ENCODE measurements at regions of chr11 and their contacts with region 1.

Region 1: DNA sequence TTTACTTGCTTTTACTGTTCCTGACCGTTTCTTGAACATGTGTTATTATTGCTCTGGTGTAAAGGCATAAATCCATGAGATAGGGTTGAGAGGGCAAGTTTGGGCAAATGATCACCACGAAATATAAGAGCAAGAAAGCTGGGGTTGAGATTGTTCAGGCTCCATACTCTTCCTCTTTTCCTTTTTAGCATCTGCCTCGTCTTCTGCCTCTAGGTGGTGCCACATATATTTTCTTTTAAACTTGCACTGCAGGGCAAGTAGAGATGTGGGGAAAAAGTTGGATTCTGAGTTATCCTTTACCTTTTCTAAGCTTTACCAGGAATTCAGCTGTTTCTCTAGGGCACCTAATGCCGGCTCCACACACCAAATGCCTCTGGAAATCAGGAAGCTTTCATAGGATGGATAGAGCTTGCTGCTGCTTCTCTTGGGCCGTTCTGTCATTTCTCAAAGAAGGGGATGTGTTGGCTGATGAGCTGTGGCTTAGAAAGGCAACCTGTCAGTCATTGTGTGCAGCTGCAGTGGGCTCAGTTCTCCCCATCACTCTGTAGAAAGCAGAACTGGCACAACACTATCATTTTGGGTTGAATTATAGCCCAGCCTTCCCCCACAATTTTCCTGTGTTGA is 98.2 kb downstream of the LDLRAD3 start:
- DNase-seq: no peak
- H3K4me3 ChIP-seq: no peak overlapping the region
- H3K27me3 ChIP-seq: no peaks in the 10 kb centered on the region
- CTCF ChIP-seq: peak; percentile 69

Region 2: DNA sequence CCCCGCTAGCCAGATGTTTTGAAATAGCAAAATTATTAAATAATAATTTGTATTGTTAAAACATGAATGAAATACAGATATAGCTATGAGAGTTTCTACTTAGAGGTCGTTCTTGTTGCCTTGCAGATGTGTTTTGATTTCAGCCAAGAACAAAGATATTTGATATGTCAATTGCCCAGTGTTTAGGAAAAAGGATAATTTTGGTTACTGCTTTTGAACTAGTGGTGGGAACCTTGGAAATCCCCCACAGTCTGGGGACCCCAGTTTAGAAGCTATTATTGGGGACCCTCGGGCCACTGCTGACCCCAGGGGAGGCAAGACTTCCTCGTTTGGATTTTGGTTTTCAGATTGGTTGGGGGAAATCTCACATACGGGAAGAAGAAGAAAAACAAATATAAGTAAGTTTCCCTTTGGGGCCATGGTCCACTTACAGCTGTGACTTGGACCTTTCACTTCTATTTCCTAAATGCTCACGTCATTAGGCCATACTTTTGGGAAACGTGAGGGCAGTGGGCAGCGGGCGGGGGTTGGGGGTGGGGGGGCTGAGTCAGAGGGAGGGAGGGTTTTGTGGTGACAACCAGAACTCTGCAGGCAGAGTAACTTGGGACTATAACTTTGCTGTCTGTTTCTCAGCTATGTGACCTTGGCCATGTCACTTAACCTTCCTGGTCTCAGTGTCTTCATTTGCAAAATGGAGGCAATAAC is 61.3 kb before region 1 on chr11:
- CTCF ChIA-PET with region 1: no interaction called
- POLR2A ChIA-PET with region 1: no interaction called
- DNase-seq: no peak
- H3K4me3 ChIP-seq: no peak overlapping the region
- H3K27me3 ChIP-seq: no peaks in the 10 kb centered on the region
- CTCF ChIP-seq: no peak

Region 3: DNA sequence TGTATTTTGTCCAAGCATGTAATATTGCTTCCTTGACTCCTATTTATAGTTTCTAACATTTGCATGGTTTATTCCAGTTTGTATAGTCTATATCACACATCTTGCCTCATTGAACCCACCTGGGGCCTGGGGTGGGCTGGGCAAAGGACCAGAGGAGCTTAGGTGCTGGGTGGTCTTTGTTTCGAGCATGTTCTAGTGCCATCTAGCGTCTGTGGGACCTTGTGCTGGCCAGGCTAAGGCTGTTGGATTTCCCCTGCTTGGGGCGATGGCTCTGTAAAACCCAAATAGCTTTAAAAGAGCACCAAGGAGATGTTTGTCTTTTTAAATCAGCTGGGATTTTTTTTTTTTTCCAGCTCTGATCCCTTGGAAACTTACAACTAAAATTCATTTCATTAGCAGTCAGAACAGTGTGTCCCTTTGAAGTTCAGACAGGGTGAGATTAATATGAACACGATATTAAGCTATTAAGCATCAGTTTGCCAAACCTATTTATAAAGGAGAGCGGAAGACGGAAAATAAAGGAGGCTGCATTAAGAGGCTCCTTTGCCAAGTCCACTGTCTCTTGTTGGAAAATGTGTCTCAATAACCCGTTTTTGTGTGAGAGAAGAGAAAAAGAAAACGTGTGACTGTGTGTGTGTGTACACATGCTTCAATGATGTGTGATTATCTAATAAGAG is 89.8 kb after region 1 on chr11:
- CTCF ChIA-PET with region 1: interaction called, 32 read pairs
- POLR2A ChIA-PET with region 1: no interaction called
- DNase-seq: no peak
- H3K4me3 ChIP-seq: no peak overlapping the region
- H3K27me3 ChIP-seq: no peaks in the 10 kb centered on the region
- CTCF ChIP-seq: peak; percentile 88

Region 4: DNA sequence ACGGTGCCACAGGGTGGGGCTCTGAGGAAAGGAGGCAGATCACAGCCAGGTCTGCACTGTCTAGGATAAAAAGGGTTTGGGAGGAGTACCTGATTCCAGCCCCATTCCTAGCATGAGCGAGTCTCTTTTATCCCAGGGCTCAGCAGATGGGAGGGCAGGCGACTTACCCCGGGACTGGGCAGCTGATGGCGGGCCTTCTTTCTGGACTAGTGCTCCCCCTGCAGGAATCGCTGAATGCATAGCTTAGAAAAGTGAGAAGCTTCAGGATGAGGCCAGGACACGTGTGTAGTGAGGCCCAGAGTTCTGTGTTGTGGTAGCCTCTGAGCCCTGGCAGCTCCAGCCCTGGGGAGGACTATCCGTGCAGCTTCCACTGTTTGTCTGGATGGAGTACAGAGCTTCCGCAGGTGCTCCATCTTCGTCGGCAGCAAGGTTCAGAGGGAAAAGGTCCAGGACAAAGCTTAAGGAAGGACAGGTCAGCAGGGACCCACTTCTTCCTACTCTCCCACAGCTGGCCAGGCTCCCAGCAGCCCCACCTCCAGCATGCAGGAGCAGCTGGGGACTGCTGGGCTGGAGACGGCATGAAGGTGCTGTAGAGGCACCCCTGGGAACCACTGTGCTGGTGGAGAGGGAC is 216.7 kb after region 1 on chr11:
- CTCF ChIA-PET with region 1: interaction called, 20 read pairs
- POLR2A ChIA-PET with region 1: no interaction called
- DNase-seq: no peak
- H3K4me3 ChIP-seq: no peak overlapping the region
- H3K27me3 ChIP-seq: peaks cover 2% of the 10 kb centered on the region
- CTCF ChIP-seq: peak; percentile 78

Region 5: DNA sequence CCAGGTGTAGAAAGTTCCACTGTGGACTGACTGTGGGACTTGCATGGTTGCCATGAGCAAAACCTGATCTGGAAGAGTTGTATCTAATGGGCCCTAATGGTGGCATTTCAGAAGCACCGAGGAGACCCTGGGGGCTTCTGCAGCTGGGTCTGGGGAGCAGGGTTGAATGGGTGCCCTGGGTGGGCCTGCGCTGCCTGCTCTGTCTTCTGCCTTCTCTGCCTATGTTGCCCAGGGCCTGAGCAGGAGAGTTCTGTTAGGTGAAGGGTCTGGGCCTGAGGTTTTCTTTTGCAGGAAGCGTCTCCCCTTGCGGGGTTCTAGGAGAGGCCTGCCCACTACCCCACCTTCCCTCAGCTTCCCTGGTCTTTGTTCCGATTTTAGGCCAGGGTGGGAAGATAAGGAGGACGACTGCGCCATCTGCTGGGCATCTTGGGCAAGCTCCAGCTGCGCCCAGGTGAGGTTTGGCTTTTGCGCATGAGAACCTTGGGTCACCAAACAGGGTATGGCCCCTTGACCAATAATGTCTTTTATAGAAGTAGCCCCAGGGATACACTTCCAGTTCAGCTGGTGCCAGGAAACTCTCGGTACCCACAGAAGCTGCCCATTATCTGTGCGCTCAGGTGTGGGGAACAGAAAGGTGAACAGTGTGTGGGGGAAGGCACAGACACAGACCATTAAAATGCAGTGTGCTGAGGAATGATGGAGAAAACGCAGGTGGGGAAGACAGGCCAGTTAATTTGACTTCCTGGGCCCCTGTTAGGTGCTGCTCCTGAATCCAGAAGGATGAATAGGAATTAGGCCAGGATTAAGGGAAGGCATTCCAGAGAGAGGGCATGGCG is 223.9 kb after region 1 on chr11:
- CTCF ChIA-PET with region 1: interaction called, 13 read pairs
- POLR2A ChIA-PET with region 1: no interaction called
- DNase-seq: no peak
- H3K4me3 ChIP-seq: no peak overlapping the region
- H3K27me3 ChIP-seq: peaks cover 2% of the 10 kb centered on the region; the same call in 1 of the 2 replicates
- CTCF ChIP-seq: peak; percentile 87

Measured in BJ (cell line).